Dorsolateral prefrontal cortex (tissue), 120 donors: ENCODE measurements at regions of chr5 and their contacts with region 1.

Region 1: DNA sequence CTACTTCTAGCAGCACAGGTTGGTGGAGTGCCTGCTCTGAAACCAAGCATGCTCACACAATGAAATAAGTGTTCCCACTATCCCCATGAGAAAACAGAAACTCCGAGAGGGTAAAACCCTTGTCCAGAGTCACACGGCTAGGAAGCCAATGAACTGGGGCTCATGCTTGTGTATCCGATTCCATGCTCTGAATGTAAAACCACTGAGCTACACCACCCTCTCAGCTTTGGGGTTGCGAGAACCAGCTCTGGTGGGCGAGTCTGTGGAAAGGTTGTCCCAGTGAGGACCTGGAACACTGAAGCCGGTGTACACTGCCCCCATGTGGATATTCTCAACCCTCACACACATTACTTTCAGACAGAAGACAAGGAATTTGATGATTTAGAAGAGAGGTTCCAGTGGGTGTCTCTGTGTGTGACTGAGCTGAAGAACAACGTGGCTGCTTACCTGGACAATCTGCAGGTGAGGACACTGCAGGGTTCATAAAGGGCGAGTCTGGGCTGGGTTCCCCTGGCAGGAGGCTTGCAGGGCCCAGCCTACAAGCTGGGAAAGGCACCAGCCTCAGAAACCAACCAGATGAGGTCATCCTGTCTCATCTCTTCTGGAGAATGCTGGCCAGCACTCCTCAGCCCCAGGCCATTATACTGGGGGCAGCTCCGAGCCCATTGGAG is 37.4 kb downstream of the ARHGEF37 start:
- DNase-seq: peak in 7 of 10 donors; percentile 24 to 77 (median 58)
- H3K4me3 ChIP-seq: no peak overlapping the region
- H3K27ac ChIP-seq: peak overlapping the region in 40 of 59 donors; percentile 0 to 78 (median 54)
- H3K27me3 ChIP-seq: no peaks in the 10 kb centered on the region
- CTCF ChIP-seq: peak in 55 of 56 donors; percentile 19 to 81 (median 70)

Region 2: DNA sequence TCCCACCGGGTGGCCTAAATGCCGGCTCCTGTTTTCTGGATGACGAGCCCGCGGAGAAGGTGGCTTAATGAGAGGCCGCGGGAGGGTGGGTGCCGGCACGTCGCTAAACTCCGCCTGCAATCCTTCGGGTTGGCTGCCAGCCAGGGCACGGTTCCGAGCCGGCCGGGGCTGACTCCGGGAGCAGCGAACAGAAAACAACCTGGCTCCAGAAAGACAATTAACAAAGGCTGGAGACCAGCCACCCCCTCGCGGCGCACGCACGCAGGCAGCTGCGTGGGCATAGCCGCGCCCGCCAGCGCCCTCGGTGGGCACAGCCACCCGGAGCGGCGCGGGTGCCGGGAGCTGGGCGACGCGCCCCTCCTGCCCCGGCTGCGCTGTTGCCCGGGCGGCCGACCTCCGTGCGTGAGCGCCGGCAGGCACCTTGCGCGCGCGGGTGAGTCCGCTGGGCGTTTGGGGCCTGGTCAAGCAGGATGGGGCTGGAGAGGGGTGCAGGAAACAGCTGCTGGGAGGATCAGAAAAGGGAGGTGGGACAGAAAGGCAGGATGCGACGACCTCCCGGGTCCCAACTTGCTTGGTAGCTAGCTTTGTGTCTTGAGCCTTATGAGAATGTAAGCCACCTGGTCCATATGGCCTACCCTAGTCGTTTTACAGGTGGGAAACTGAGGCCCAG is 37.4 kb before region 1 on chr5 and contains the start of gene ARHGEF37:
- intact Hi-C with region 1: loop called in 1 of 2 experiments (anchors 5 kb)
- DNase-seq: peak; percentile 87 to 95 (median 92)
- H3K4me3 ChIP-seq: peak within 1 kb of the TSS; percentile 39 to 84 (median 70)
- H3K27ac ChIP-seq: peak within 1 kb of the TSS; percentile 73 to 99 (median 96)
- H3K27me3 ChIP-seq: no peaks in the 10 kb centered on the region
- CTCF ChIP-seq: peak in 33 of 56 donors; percentile 5 to 54 (median 31)
- total RNA-seq, gene ARHGEF37: 12.0 to 71.9 (median 27.0) TPM

Region 3: DNA sequence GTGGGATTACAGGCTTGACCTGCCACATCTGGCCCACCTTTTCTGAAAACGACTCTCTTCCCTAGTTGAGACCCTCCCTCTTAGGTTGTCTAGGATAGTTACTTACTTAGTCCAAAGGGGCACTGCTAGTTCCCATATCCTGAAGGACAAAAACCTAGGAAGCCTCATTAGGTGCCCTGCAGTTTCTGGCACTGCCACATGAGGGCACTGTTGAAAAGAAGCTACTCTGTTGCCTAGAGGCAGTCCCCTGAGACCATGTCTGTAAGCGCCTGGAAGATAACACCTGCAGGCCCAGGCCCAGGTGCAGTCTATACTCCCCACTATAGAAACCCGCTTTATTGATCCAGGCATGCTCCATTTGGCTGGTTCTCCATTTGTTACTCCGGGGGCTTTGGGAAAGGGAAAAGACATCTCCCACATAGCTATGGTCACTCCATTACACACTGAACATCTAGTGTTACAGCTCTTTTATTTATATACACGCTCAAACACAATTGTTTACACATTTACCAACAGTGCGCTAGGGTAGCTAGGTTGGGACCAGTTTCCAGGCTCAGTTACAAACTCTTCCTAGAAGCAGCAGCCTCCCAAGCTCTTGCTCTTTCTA is 38.0 kb after region 1 on chr5:
- intact Hi-C with region 1: no loop called
- DNase-seq: no peak
- H3K4me3 ChIP-seq: no peak overlapping the region
- H3K27ac ChIP-seq: no peak overlapping the region
- H3K27me3 ChIP-seq: peaks cover 0 to 4% (median 0%) of the 10 kb centered on the region in 45 donors
- CTCF ChIP-seq: peak in 47 of 56 donors; percentile 15 to 53 (median 37)